Left cardiac atrium (tissue), 4 donors: ENCODE measurements at regions of chr4 and their contacts with region 1.

Region 1: GRCh38 chr4:138259801-138260200 is 17.7 kb upstream of the SLC7A11 start:
- DNase-seq: no peak
- ATAC-seq: no peak

Region 2: DNA sequence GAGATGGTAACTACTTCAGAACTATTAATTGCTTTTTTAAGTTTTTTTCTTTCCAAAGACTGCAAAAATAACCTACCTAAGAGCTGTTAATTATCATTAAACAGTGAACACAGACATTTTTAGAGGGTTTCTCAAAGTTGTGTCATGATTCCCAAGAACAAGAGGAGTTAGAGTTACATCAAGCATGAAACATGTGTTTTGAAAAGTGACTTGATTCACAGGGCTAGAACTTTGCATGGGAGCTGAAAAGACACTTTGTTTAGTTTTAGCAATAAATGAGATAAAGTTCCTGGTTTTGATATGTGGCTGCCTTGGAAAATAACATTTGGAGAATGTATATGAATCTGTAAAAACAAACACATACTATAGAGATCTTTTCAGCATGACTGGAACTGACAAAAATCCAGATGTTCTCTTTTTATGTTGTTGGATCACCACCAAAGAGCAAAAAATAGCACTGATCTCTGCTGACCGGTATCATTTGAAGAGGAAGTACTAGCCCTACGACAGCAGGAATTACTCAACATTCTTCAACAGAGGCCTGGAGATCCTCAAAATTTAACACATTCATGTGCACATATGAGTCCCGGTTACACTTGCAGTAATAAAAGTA is 554.5 kb before region 1 on chr4:
- intact Hi-C with region 1: no loop called
- DNase-seq: no peak
- ATAC-seq: peak; percentile 86 to 88

Region 3: GRCh38 chr4:137934911-137935310 is 324.9 kb before region 1 on chr4:
- intact Hi-C with region 1: no loop called
- DNase-seq: no peak
- ATAC-seq: no peak

Region 4: GRCh38 chr4:138193963-138194362 is 65.8 kb before region 1 on chr4:
- intact Hi-C with region 1: loop called in 1 of 2 experiments (anchors 2 kb)
- DNase-seq: no peak
- ATAC-seq: peak; percentile 91 to 94

Region 5: DNA sequence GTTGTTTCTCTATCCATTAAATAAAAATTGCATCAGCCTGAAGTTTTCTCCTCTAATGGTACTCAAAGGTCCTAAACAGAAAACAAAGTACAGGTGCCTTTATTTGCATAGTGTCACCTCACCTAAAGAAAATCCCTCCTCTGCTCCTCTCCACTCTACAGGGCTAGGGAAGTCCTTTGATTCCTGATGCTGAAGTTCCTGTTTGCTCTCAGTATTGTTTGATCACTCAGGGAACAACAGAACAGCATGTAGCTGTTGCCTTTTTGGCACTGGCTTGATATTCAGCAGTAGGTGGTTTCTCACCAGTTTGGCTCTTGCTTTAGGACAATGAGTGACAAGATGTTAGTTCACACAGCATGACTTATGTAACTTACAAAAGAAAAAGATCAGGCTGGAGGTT is 138.5 kb after region 1 on chr4:
- intact Hi-C with region 1: loop called in 1 of 2 experiments (anchors 5 kb)
- DNase-seq: no peak
- ATAC-seq: peak; percentile 16 to 24